ENCODE measurements at regions of chr3 and their contacts with region 1.

Region 1: DNA sequence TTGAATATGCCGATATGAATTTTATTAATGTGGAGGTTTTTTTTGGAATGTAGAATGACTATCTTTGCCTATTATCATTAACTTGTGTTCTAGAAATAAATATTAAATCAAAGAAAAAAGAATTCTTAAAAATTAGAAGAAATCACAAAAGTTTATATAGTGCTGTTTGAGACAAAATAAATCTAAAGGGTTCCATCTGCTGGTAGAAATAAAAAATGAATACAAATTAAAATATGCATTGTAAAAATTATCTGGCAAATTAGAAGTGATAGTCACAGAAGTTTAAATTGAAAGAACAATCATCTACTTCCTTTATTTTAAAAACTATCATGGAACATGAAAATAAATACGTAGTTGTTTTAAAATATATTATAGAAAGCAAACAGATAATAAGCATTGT is 22.7 kb upstream of the ZBTB20 start:
- DNase-seq: no peak
- ATAC-seq: no peak
- H3K4me3 ChIP-seq: no peak overlapping the region
- H3K27ac ChIP-seq: no peak overlapping the region
- H3K4me1 ChIP-seq: no peaks in the 10 kb centered on the region
- H3K27me3 ChIP-seq: no peaks in the 10 kb centered on the region
- CTCF ChIP-seq: peak; percentile 52

Region 2: GRCh38 chr3:114827495-114827894 is 342.3 kb before region 1 on chr3:
- intact Hi-C with region 1: loop called (anchors 5 kb)
- DNase-seq: no peak
- ATAC-seq: peak in 3 of 4 donors; percentile 74 to 83 (median 76)
- H3K4me3 ChIP-seq: no peak overlapping the region
- H3K27ac ChIP-seq: no peak overlapping the region
- H3K4me1 ChIP-seq: no peaks in the 10 kb centered on the region
- H3K27me3 ChIP-seq: no peaks in the 10 kb centered on the region
- CTCF ChIP-seq: peak; percentile 62

Region 3: GRCh38 chr3:115040673-115041286 is 129.0 kb before region 1 on chr3:
- intact Hi-C with region 1: loop called in 1 of 2 experiments (anchors 5 kb)
- DNase-seq: no peak
- ATAC-seq: peak in 1 of 4 donors; percentile 58
- H3K4me3 ChIP-seq: no peak overlapping the region
- H3K27ac ChIP-seq: no peak overlapping the region
- H3K4me1 ChIP-seq: peaks cover 6% of the 10 kb centered on the region
- H3K27me3 ChIP-seq: no peaks in the 10 kb centered on the region
- CTCF ChIP-seq: peak; percentile 55

Measured in psoas muscle (tissue), 8 donors.